Dendritic cell treated with granulocyte-macrophage colony-stimulating factor and Interleukin-4, amounts not matched to agents 40 ng/mL and 50 ng/mL, for 4 days (primary cell): ENCODE measurements at regions of chr1 and their contacts with region 1.

Region 1: GRCh38 chr1:119608816-119609454 is 39.1 kb downstream of the ZNF697 start:
- H3K4me3 Mint-ChIP-seq: no peak overlapping the region
- H3K27ac Mint-ChIP-seq: peak overlapping the region; percentile 52
- H3K4me1 Mint-ChIP-seq: peaks cover 53% of the 10 kb centered on the region
- H3K27me3 Mint-ChIP-seq: no peaks in the 10 kb centered on the region

Region 2: GRCh38 chr1:119462964-119463363 is 146.0 kb before region 1 on chr1:
- intact Hi-C with region 1: no loop called
- H3K4me3 Mint-ChIP-seq: no peak overlapping the region
- H3K27ac Mint-ChIP-seq: no peak overlapping the region
- H3K4me1 Mint-ChIP-seq: peaks cover 5% of the 10 kb centered on the region
- H3K27me3 Mint-ChIP-seq: peaks cover 2% of the 10 kb centered on the region

Region 3: DNA sequence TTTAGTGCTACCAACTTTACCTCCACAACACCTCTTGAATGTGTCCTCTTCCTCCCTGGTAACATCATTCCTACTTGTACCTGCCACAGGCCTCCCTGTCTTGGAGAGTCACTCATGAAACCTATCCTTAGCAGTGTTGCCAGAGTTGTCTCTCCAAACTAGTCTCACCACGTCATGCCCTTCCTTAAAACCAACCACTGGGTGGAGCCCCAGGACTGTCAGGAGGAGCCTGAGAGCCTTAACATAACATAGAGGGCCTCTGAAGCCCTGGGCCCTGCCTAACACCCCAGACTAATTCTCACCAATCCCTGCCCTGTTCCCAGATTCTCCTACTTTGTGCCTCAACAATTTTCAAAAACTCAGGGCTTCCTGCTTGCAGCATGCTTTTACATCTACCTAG is 26.1 kb before region 1 on chr1:
- intact Hi-C with region 1: loop called (anchors 2 kb)
- H3K4me3 Mint-ChIP-seq: no peak overlapping the region
- H3K27ac Mint-ChIP-seq: peak overlapping the region; percentile 4
- H3K4me1 Mint-ChIP-seq: peaks cover 63% of the 10 kb centered on the region
- H3K27me3 Mint-ChIP-seq: no peaks in the 10 kb centered on the region

Region 4: GRCh38 chr1:119594376-119594775 is 14.6 kb before region 1 on chr1:
- intact Hi-C with region 1: no loop called
- H3K4me3 Mint-ChIP-seq: no peak overlapping the region
- H3K27ac Mint-ChIP-seq: no peak overlapping the region
- H3K4me1 Mint-ChIP-seq: peaks cover 30% of the 10 kb centered on the region
- H3K27me3 Mint-ChIP-seq: no peaks in the 10 kb centered on the region